Activated B cell treated with CpG ODN at 0.5 μM for 24 hours (primary cell): ENCODE measurements at regions of chr15 and their contacts with region 1.

Region 1: DNA sequence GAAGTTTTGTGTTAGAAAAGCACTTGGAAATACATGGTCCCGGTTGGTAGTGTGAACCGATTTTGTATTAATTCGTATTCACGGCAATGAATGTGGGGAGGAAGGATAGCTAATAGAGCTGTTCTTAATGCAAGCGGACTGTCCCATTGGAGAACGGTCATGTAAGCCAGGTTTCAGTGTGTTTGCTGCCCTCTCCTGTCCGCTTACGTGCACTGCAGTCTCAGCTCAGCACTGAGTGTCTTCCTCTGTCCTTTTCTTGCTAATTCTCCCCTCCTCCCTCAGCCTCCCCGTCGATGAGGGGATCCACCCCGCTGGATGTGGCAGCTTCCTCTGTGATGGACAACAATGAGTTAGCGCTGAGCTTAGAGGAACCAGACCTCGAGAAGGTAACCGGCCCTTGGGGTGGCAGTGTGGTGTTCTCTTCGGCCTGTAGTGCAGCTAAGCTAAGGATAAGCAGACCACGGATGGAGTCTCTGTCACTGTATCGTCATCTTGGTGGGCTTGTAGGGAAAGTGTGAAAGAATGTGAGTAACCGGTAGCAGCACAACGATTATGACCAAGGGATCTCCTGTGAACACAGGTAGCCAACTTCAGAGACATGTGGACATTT is 267.5 kb upstream of the CHRM5 start:
- DNase-seq: peak; percentile 33
- ATAC-seq: peak; percentile 77
- H3K4me3 Mint-ChIP-seq: no peak overlapping the region
- H3K27ac Mint-ChIP-seq: no peak overlapping the region
- H3K4me1 Mint-ChIP-seq: no peaks in the 10 kb centered on the region
- H3K27me3 Mint-ChIP-seq: no peaks in the 10 kb centered on the region
- CTCF ChIP-seq: peak; percentile 75

Region 2: DNA sequence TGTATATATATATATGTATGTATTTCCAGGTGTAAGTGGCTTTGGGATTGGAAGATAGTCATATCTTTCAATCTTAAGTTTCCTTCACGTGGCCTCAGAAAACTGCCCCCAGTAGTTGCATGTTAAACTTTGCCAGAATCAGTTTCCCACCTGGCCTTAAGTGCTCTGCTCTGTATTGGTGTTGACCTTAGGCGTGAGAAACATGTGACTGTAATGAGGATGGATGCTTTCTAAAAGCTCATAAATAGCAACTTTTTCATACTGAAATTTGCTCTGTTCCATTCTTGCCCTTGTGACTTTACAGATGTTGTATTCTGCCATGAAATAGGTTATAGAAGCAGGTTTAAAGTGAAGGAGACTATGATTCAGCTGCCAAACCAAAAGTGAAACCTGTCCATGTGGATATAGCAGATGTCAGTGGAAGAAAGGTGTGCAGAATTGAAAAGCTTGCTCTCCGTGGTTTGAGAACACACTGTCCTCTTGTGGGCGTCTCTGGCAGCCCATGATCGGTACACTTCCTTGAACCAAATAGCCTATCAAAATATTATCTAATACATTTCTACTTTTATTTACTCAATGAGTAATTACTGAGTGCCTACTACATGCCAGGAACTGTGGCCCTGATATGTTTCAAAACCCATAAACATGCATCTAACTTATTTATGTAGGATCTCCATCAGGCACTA is 1043.5 kb before region 1 on chr15:
- CTCF ChIA-PET with region 1: interaction called, 9 read pairs
- POLR2A ChIA-PET with region 1: no interaction called
- intact Hi-C with region 1: loop called (anchors 1 kb)
- DNase-seq: no peak
- ATAC-seq: no peak
- H3K4me3 Mint-ChIP-seq: no peak overlapping the region
- H3K27ac Mint-ChIP-seq: no peak overlapping the region
- H3K4me1 Mint-ChIP-seq: no peaks in the 10 kb centered on the region
- H3K27me3 Mint-ChIP-seq: no peaks in the 10 kb centered on the region
- CTCF ChIP-seq: no peak

Region 3: GRCh38 chr15:33021806-33022389 is 678.9 kb before region 1 on chr15:
- CTCF ChIA-PET with region 1: interaction called, 5 read pairs
- POLR2A ChIA-PET with region 1: no interaction called
- intact Hi-C with region 1: loop called (anchors 1 kb)
- DNase-seq: no peak
- ATAC-seq: no peak
- H3K4me3 Mint-ChIP-seq: no peak overlapping the region
- H3K27ac Mint-ChIP-seq: no peak overlapping the region
- H3K4me1 Mint-ChIP-seq: no peaks in the 10 kb centered on the region
- H3K27me3 Mint-ChIP-seq: peaks cover 10% of the 10 kb centered on the region
- CTCF ChIP-seq: no peak

Region 4: GRCh38 chr15:33086507-33087121 is 614.2 kb before region 1 on chr15:
- CTCF ChIA-PET with region 1: interaction called, 18 read pairs
- POLR2A ChIA-PET with region 1: no interaction called
- intact Hi-C with region 1: no loop called
- DNase-seq: no peak
- ATAC-seq: no peak
- H3K4me3 Mint-ChIP-seq: no peak overlapping the region
- H3K27ac Mint-ChIP-seq: no peak overlapping the region
- H3K4me1 Mint-ChIP-seq: no peaks in the 10 kb centered on the region
- H3K27me3 Mint-ChIP-seq: no peaks in the 10 kb centered on the region
- CTCF ChIP-seq: no peak

Region 5: GRCh38 chr15:33292717-33293307 is 408.0 kb before region 1 on chr15:
- CTCF ChIA-PET with region 1: interaction called, 28 read pairs
- POLR2A ChIA-PET with region 1: no interaction called
- intact Hi-C with region 1: loop called (anchors 1 kb)
- DNase-seq: no peak
- ATAC-seq: no peak
- H3K4me3 Mint-ChIP-seq: no peak overlapping the region
- H3K27ac Mint-ChIP-seq: no peak overlapping the region
- H3K4me1 Mint-ChIP-seq: no peaks in the 10 kb centered on the region
- H3K27me3 Mint-ChIP-seq: peaks cover 5% of the 10 kb centered on the region
- CTCF ChIP-seq: no peak

Region 6: DNA sequence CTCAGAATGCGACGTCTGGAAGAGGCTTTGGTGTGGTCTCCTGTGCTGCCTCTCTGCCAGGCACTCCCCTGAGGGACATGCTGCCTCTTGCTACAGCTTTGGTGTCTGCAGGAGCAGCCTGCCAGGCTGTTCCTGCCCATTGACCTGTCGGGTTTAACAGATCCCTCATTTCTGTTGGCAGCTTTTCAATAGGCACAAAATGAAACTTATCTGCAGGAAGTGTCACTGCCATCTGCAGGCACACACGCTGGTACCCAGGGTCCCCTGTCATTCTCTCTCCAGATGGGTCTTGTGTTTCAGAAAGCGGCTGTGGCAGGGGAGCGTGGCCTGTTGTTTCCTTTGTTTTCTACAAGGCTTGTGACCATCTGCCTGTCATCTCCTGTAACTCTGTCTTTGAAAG is 60.8 kb before region 1 on chr15:
- CTCF ChIA-PET with region 1: no interaction called
- POLR2A ChIA-PET with region 1: no interaction called
- intact Hi-C with region 1: no loop called
- DNase-seq: no peak
- ATAC-seq: no peak
- H3K4me3 Mint-ChIP-seq: no peak overlapping the region
- H3K27ac Mint-ChIP-seq: no peak overlapping the region
- H3K4me1 Mint-ChIP-seq: peaks cover 14% of the 10 kb centered on the region
- H3K27me3 Mint-ChIP-seq: peaks cover 2% of the 10 kb centered on the region
- CTCF ChIP-seq: no peak

Region 7: DNA sequence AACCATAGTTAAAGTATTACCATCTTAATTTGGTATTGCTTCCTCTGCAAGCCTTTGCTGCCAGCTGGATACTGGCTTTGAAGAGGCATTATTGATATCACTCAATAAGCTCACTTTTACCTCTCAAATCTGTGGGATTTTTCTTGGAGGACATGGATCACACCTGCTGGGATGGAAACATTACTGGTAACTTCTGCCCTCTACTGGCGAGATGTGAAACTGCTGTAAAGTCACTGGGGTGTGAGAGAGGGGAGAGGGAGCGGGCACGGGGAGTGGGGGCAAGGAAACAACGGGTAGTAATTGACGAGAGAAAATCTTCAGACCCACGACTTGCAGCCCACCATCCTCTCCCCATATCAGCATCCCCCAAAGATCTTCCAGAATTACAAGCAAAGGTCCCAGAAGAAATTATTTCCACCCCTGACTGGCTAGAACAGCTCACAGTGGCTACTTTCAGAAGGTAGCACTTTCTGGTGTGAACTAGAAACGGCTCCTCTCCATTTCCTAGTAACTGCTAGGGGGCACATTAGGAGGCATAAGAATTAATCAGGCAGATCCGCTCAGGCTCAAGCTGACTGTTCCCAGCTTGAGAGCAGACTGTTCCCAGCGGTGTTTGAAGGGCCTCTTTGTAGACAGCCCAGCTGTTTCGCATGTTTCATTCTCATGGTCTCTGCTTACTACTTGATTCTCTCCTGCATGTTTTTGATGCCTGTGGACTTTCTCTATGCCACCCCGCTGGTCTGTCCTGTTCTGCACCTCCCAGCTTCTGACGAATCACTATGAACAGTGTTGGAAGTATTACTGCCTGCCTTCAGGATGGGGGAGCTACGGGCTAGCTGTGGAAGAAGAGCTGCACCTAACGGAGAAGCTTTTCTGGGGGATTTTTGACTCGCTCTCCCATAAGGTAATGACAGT is 37.1 kb after region 1 on chr15:
- CTCF ChIA-PET with region 1: interaction called, 14 read pairs
- POLR2A ChIA-PET with region 1: no interaction called
- intact Hi-C with region 1: no loop called
- DNase-seq: no peak
- ATAC-seq: no peak
- H3K4me3 Mint-ChIP-seq: no peak overlapping the region
- H3K27ac Mint-ChIP-seq: no peak overlapping the region
- H3K4me1 Mint-ChIP-seq: peaks cover 3% of the 10 kb centered on the region
- H3K27me3 Mint-ChIP-seq: no peaks in the 10 kb centered on the region
- CTCF ChIP-seq: no peak